Activated CD4-positive, alpha-beta T cell treated with anti-CD3 and anti-CD28 coated beads, Interleukin-2, amount 10 ng/mL, durations not matched to agents 7 days and 5 days (primary cell): ENCODE measurements at regions of chr18 and their contacts with region 1.

Region 1: GRCh38 chr18:2994603-2995432 is 18.1 kb downstream of the LPIN2 start:
- DNase-seq: peak; percentile 78
- H3K4me3 Mint-ChIP-seq: peak overlapping the region; percentile 33
- H3K27ac Mint-ChIP-seq: peak overlapping the region; percentile 75
- H3K4me1 Mint-ChIP-seq: peaks cover 79% of the 10 kb centered on the region
- H3K27me3 Mint-ChIP-seq: no peaks in the 10 kb centered on the region

Region 2: GRCh38 chr18:2958819-2959298 is 36.0 kb before region 1 on chr18:
- CTCF ChIA-PET with region 1: interaction called, 12 read pairs
- POLR2A ChIA-PET with region 1: interaction called, 5 read pairs
- DNase-seq: peak; percentile 65
- H3K4me3 Mint-ChIP-seq: peak overlapping the region; percentile 69
- H3K27ac Mint-ChIP-seq: peak overlapping the region; percentile 97
- H3K4me1 Mint-ChIP-seq: peaks cover 91% of the 10 kb centered on the region
- H3K27me3 Mint-ChIP-seq: no peaks in the 10 kb centered on the region

Region 3: GRCh38 chr18:2978646-2979045 is 16.2 kb before region 1 on chr18:
- CTCF ChIA-PET with region 1: interaction called, 21 read pairs
- POLR2A ChIA-PET with region 1: no interaction called
- DNase-seq: no peak
- H3K4me3 Mint-ChIP-seq: peak overlapping the region; percentile 82
- H3K27ac Mint-ChIP-seq: peak overlapping the region; percentile 89
- H3K4me1 Mint-ChIP-seq: peaks cover 72% of the 10 kb centered on the region
- H3K27me3 Mint-ChIP-seq: no peaks in the 10 kb centered on the region

Region 4: GRCh38 chr18:3008541-3008940 is 13.7 kb after region 1 on chr18:
- CTCF ChIA-PET with region 1: interaction called, 10 read pairs
- POLR2A ChIA-PET with region 1: interaction called, 3 read pairs
- DNase-seq: no peak
- H3K4me3 Mint-ChIP-seq: no peak overlapping the region
- H3K27ac Mint-ChIP-seq: no peak overlapping the region
- H3K4me1 Mint-ChIP-seq: peaks cover 56% of the 10 kb centered on the region
- H3K27me3 Mint-ChIP-seq: no peaks in the 10 kb centered on the region

Region 5: GRCh38 chr18:3129053-3129864 is 134.4 kb after region 1 on chr18:
- CTCF ChIA-PET with region 1: interaction called, 13 read pairs
- POLR2A ChIA-PET with region 1: no interaction called
- DNase-seq: peak; percentile 87
- H3K4me3 Mint-ChIP-seq: no peak overlapping the region
- H3K27ac Mint-ChIP-seq: no peak overlapping the region
- H3K4me1 Mint-ChIP-seq: peaks cover 9% of the 10 kb centered on the region
- H3K27me3 Mint-ChIP-seq: no peaks in the 10 kb centered on the region